ENCODE measurements at regions of chr12 and their contacts with region 1.

Region 1: DNA sequence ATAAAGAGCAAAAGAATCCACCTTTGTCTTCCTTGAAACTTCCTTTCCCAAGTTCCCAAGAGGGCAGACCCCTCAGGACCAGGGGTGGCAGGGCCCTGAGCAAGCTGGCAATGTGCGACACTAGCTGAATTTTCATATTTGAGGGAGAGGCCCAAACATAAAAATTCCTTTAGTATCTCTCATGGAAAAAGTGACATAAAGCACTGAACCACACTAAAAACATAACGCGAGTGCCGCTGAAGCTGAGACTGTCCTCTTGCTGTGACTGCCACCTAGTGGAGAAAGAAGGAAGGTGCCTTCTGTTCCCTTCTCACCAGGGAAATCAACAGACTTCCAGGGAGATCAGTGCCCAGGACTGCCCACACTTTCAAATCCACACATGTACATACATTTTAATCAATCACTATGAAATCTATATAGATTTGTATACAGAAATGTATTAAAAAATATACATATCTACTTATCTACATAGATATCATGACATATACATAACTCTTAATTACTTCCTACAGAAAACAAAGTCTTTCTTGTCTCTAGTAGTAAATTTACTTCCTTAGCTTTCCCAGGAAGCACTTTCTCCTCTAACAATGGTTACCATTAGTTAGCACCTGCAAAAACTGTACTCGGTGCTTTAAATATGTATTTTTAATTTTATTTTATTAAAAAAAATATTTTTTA is 53.8 kb downstream of the SSH1 start:
- DNase-seq: peak; percentile 79
- ATAC-seq: peak; percentile 92
- H3K4me3 Mint-ChIP-seq: no peak overlapping the region
- H3K27ac Mint-ChIP-seq: peak overlapping the region; percentile 73
- H3K4me1 Mint-ChIP-seq: peaks cover 7% of the 10 kb centered on the region
- H3K27me3 Mint-ChIP-seq: no peaks in the 10 kb centered on the region
- CTCF ChIP-seq: peak; percentile 99

Region 2: DNA sequence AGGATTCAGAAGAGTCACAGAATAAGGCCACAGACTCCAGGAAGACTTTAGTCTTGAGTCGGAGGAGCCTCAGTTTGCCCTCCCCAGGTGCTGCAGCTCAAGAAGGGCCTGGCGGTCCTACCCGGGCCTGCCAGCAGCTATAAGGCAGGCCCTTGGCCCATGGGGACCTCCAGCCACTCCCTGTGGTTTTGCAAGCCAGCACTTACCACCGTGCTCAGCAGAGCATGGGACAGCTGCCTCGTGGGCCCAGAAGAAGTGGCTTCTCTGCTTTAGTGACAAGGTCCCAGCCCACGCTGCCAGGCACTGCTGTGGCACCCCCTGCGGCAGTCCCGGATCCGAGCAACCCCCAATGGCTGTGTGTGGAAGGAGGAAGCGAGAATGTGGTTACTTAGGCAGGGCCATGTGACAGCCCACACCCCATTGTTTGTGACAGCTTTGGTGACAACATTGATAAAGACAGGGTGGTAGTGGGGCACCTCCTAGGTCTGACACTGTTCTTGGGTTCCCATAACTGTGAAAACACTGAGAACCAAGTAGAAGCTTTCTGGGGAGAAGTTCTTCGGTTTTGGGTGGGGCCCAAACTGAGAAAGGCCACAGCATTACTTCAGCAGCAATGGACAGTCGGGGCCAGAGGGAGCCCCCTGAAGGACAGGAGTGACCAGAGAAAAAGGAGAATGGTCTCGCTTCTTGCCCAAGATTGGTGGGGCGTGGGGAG is 169.9 kb before region 1 on chr12 and contains the start of gene SELPLG:
- CTCF ChIA-PET with region 1: interaction called, 31 read pairs
- POLR2A ChIA-PET with region 1: interaction called, 5 read pairs
- intact Hi-C with region 1: no loop called
- DNase-seq: peak; percentile 94
- ATAC-seq: peak; percentile 52
- H3K4me3 Mint-ChIP-seq: peak within 1 kb of the TSS; percentile 91
- H3K27ac Mint-ChIP-seq: peak within 1 kb of the TSS; percentile 100
- H3K4me1 Mint-ChIP-seq: peaks cover 62% of the 10 kb centered on the region
- H3K27me3 Mint-ChIP-seq: no peaks in the 10 kb centered on the region
- CTCF ChIP-seq: no peak
- total RNA-seq, gene SELPLG: 22.1 to 23.8 TPM

Region 3: DNA sequence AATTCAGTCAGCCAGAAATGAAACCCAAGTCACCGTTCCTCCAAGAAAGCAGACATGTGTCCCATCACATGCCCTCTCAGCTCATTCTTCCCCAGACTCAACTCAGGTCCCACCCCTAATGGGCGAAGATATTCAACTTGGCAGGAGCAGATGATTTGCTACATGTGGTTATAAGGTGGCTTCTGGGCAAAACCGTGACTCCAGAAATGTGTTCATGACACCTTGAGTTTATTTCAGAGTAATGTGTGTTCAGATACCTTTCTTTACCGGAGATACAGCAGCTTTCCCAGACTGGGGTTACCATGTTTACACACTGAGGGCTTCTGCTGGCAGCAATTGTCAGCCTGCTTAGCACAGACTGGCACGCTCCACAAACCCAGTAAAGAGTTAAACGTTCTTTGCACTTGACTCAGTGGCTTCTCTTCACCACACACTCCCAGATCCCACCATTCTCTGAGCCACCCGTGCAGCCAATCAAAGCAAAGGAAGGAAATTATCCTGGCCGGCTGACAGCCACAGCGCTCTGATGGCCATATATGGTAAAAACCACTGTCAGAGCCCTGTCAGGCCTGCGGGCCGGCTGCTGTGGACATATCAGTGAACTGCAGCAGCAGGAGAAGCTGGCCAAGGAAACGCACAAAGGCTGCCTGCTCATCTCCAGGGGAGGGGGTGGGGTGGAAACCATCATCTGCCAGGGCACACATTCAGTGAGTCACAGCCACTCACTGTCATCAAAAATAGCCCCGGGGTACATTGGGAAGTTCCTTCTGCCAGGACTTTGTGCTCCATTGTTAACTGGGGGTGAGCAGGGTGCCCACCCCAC is 112.2 kb before region 1 on chr12:
- CTCF ChIA-PET with region 1: interaction called, 30 read pairs
- POLR2A ChIA-PET with region 1: no interaction called
- intact Hi-C with region 1: no loop called
- DNase-seq: peak; percentile 95
- ATAC-seq: peak; percentile 81
- H3K4me3 Mint-ChIP-seq: peak overlapping the region; percentile 63
- H3K27ac Mint-ChIP-seq: peak overlapping the region; percentile 86
- H3K4me1 Mint-ChIP-seq: peaks cover 68% of the 10 kb centered on the region
- H3K27me3 Mint-ChIP-seq: no peaks in the 10 kb centered on the region
- CTCF ChIP-seq: peak; percentile 41

Region 4: GRCh38 chr12:108816652-108817335 is 13.2 kb after region 1 on chr12:
- CTCF ChIA-PET with region 1: interaction called, 20 read pairs
- POLR2A ChIA-PET with region 1: interaction called, 3 read pairs
- intact Hi-C with region 1: no loop called
- DNase-seq: no peak
- ATAC-seq: no peak
- H3K4me3 Mint-ChIP-seq: no peak overlapping the region
- H3K27ac Mint-ChIP-seq: no peak overlapping the region
- H3K4me1 Mint-ChIP-seq: peaks cover 9% of the 10 kb centered on the region
- H3K27me3 Mint-ChIP-seq: no peaks in the 10 kb centered on the region
- CTCF ChIP-seq: no peak

Region 5: GRCh38 chr12:108850854-108851573 is 47.4 kb after region 1 on chr12:
- CTCF ChIA-PET with region 1: no interaction called
- POLR2A ChIA-PET with region 1: no interaction called
- intact Hi-C with region 1: no loop called
- DNase-seq: no peak
- ATAC-seq: no peak
- H3K4me3 Mint-ChIP-seq: no peak overlapping the region
- H3K27ac Mint-ChIP-seq: peak overlapping the region; percentile 12
- H3K4me1 Mint-ChIP-seq: peaks cover 22% of the 10 kb centered on the region
- H3K27me3 Mint-ChIP-seq: no peaks in the 10 kb centered on the region
- CTCF ChIP-seq: no peak

Region 6: DNA sequence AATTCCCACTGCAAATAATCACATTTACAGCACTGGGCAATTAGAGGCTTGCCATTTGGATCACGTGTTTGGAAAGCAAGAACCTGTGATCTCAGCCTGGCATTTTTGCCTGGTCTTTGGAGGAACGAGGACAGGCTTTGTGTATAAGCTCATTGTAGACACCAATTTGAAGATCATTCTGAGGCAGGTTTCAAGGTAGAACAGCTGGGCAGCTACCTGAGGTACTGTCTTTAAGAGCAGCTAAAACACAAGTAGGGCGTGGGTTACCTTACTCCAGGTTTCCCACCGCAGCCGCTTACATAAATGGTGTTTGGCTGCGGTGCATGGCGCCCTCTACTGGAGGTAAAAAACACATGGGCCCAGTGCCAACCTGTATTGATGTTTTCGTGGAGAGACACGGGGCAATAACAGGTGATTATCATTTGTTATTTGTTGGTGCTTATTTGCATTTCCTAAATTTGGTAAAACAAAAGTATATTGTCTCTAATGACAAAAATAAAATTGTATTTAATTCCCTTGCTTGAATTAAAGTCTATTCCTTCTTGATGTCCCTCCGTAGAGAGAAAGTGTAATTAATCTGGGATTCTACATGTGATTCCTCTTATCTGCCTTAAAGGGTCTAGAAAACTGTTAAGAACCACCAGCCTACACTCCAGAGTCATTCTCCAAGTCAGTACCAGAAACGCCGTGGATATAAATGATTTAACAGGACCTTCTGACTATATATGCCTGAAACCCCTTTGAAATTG is 147.6 kb after region 1 on chr12:
- CTCF ChIA-PET with region 1: interaction called, 12 read pairs
- POLR2A ChIA-PET with region 1: no interaction called
- intact Hi-C with region 1: no loop called
- DNase-seq: peak; percentile 83
- ATAC-seq: peak; percentile 90
- H3K4me3 Mint-ChIP-seq: no peak overlapping the region
- H3K27ac Mint-ChIP-seq: no peak overlapping the region
- H3K4me1 Mint-ChIP-seq: peaks cover 3% of the 10 kb centered on the region
- H3K27me3 Mint-ChIP-seq: peaks cover 4% of the 10 kb centered on the region
- CTCF ChIP-seq: peak; percentile 88

Measured in activated CD8-positive, alpha-beta T cell treated with anti-CD3 and anti-CD28 coated beads for 36 hours (primary cell).